Gastrocnemius medialis (tissue), 4 donors: ENCODE measurements at regions of chr19 and their contacts with region 1.

Region 1: DNA sequence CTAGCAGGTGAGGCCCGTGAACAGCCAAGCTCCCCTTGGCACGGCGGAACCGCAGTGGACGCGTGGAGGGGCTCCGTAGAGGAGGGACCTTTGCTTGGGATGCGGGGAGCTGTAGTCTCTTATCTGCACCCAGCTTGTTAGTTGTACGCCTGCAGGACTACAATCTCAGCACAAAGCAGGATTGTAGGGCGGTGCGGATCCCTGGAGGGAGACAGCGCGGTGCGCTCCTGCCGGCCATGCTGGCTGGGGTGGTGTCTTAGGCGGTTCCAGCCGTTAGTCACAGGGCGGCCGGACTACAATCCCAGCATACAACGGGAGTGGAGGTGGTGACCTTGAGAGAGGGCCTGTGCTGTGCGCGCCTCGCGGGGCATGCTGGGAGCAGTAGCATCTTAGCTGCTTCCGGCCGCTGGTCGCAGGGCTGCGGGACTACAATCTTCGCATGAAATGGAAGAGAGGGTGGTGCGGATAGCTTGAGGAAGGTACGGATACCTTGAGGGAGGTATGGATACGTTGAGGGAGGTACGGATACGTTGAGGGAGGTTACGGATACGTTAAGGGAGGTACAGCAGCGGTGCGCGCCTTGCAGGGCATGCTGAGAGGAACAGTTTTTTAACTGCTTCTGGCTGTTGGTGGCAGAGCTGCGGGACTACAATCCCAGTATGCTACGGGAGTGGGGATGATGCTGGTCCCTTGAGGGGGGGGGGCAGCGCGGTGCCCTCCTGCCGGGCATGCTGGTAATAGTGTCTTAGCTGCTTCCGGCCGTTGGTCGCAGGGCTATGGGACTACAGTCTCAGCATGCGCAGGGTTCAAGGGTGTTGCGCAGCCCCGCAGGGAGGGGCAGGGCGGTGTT is 1419.1 kb downstream of the UQCRFS1 start:
- DNase-seq: peak; percentile 92 to 94
- ATAC-seq: peak; percentile 90 to 95
- H3K4me3 ChIP-seq: peak overlapping the region; percentile 72 to 96 (median 84)
- H3K27ac ChIP-seq: peak overlapping the region; percentile 87 to 97 (median 94)
- H3K4me1 ChIP-seq: peaks cover 28 to 31% of the 10 kb centered on the region in 2 donors
- H3K27me3 ChIP-seq: no peaks in the 10 kb centered on the region
- CTCF ChIP-seq: peak in 1 of 5 experiments; percentile 26
- POLR2A ChIP-seq: peak; percentile 77 to 79

Region 2: DNA sequence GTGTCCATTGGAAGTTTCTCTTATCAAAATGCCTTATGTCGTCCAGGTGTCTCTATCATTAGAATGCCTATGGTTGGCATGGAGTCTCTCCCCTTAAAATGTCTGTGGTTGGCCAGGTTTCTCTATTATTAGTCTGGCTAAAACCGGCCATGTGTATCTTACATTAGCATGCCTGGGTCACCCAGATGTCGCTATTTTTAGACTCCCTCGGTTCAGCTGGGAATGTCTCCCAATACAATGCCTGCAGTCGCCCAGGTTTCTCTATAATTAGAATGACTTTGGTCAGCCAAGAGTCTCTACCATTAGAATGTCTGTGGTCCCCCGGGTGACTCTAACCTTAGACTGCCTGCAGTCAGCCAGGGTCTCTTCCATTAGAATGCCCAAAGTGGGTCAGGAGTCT is 117.0 kb before region 1 on chr19:
- in situ Hi-C with region 1: no loop called
- intact Hi-C with region 1: loop called (anchors 5 kb)
- DNase-seq: no peak
- ATAC-seq: peak in 1 of 2 donors; percentile 47
- H3K4me3 ChIP-seq: peak overlapping the region in 1 of 4 donors; percentile 21
- H3K27ac ChIP-seq: peak overlapping the region in 1 of 4 donors; percentile 46
- H3K4me1 ChIP-seq: peaks cover 36 to 44% of the 10 kb centered on the region in 2 donors
- H3K27me3 ChIP-seq: no peaks in the 10 kb centered on the region
- CTCF ChIP-seq: no peak
- POLR2A ChIP-seq: no peak

Region 3: GRCh38 chr19:27815985-27816384 is 22.1 kb after region 1 on chr19:
- in situ Hi-C with region 1: no loop called
- intact Hi-C with region 1: no loop called
- DNase-seq: no peak
- ATAC-seq: no peak
- H3K4me3 ChIP-seq: no peak overlapping the region
- H3K27ac ChIP-seq: no peak overlapping the region
- H3K4me1 ChIP-seq: no peaks in the 10 kb centered on the region
- H3K27me3 ChIP-seq: no peaks in the 10 kb centered on the region
- CTCF ChIP-seq: no peak
- POLR2A ChIP-seq: no peak